WTC11 (cell line): ENCODE measurements at regions of chr6 and their contacts with region 1.

Region 1: GRCh38 chr6:39302669-39303424 is 11.4 kb downstream of the KCNK17 start:
- DNase-seq: peak; percentile 95
- ATAC-seq: peak; percentile 86
- H3K4me3 Mint-ChIP-seq: peak overlapping the region; percentile 21
- H3K27ac Mint-ChIP-seq: no peak overlapping the region
- H3K4me1 Mint-ChIP-seq: peaks cover 17% of the 10 kb centered on the region
- H3K27me3 Mint-ChIP-seq: no peaks in the 10 kb centered on the region; the same call in 1 of the 2 replicates
- CTCF ChIP-seq: peak; percentile 59

Region 2: DNA sequence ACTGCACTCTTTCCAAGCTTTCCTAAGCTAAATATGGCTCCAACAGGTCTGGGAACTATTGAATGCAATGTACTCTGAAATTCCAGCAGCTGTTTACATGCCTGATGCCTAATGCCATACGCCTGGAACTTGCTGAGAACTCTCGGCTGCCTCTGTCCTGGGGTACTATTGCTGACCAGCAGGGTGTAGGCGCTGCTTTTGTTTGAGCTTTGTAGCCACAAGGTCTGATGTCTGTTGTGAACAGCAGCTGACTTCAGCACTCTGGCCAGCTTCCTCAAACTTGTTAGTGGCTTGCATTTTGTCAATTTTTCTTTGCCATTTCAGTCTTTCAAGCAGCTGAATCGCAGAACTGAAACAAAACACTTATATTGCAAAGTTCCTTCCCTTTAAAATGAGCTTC is 214.5 kb before region 1 on chr6:
- CTCF ChIA-PET with region 1: interaction called, 13 read pairs
- POLR2A ChIA-PET with region 1: no interaction called
- DNase-seq: peak; percentile 75
- ATAC-seq: peak; percentile 91
- H3K4me3 Mint-ChIP-seq: no peak overlapping the region
- H3K27ac Mint-ChIP-seq: no peak overlapping the region
- H3K4me1 Mint-ChIP-seq: peaks cover 49% of the 10 kb centered on the region
- H3K27me3 Mint-ChIP-seq: no peaks in the 10 kb centered on the region; the same call in 1 of the 2 replicates
- CTCF ChIP-seq: no peak

Region 3: DNA sequence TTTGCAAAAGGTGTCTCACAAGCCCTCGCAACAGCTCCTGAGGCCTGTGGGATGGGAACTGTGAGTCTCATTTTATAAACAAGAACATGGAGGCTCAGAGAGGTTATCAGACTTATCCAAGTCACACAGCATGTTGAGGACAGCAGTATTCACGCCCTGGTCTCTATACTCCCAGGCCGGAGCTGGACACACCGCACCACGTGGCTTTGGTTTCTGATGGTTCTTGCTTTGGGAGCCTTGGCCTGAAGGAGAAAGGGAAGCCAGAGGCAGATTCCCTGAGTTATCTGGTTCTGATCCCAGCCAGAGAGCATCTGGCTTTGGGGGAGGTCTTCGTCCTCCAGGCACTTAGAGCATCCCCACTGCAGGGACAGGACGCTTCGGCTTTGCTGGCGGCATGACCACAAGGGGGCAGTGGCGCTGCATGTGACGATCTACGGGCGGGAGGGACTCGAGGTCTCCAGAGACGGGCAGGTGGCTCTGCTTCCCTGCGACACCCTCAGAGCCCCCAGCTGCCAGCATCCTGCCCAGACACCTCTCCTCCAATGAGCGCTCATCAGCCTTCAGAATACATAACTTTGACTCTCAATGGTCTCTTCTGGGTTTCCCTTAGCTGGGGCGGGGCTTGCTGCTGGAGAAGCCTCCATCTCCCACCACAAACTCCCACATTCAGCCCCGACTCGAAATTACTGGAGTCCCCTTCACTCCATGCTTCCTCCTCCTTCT is 136.5 kb before region 1 on chr6:
- CTCF ChIA-PET with region 1: interaction called, 214 read pairs
- POLR2A ChIA-PET with region 1: no interaction called
- DNase-seq: peak; percentile 97
- ATAC-seq: peak; percentile 96
- H3K4me3 Mint-ChIP-seq: no peak overlapping the region
- H3K27ac Mint-ChIP-seq: no peak overlapping the region
- H3K4me1 Mint-ChIP-seq: peaks cover 5% of the 10 kb centered on the region
- H3K27me3 Mint-ChIP-seq: peaks cover 8% of the 10 kb centered on the region
- CTCF ChIP-seq: peak; percentile 94

Region 4: DNA sequence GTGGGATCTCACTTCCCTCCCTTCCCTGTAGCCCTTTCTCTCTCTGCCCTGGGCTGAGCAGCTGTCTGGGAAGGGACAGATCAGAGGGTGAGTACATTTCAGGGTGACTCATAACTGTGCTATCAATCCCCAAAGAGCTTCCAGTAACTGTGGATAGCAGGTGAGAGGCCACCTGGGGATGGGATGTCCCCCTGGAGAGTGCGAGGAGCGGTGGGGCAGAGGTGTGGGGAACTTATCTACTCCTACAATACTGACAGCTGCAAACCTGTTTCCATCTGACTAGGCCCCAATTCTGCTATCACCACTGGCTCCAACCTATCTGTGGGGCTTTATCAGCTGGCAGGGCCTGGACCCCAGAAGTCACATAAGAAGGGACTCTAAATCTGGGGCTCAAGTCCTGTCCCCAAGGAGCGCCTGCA is 106.2 kb before region 1 on chr6:
- CTCF ChIA-PET with region 1: interaction called, 204 read pairs
- POLR2A ChIA-PET with region 1: no interaction called
- DNase-seq: no peak
- ATAC-seq: no peak
- H3K4me3 Mint-ChIP-seq: no peak overlapping the region
- H3K27ac Mint-ChIP-seq: no peak overlapping the region; the same call in 1 of the 2 replicates
- H3K4me1 Mint-ChIP-seq: peaks cover 24% of the 10 kb centered on the region
- H3K27me3 Mint-ChIP-seq: no peaks in the 10 kb centered on the region; the same call in 1 of the 2 replicates
- CTCF ChIP-seq: no peak

Region 5: DNA sequence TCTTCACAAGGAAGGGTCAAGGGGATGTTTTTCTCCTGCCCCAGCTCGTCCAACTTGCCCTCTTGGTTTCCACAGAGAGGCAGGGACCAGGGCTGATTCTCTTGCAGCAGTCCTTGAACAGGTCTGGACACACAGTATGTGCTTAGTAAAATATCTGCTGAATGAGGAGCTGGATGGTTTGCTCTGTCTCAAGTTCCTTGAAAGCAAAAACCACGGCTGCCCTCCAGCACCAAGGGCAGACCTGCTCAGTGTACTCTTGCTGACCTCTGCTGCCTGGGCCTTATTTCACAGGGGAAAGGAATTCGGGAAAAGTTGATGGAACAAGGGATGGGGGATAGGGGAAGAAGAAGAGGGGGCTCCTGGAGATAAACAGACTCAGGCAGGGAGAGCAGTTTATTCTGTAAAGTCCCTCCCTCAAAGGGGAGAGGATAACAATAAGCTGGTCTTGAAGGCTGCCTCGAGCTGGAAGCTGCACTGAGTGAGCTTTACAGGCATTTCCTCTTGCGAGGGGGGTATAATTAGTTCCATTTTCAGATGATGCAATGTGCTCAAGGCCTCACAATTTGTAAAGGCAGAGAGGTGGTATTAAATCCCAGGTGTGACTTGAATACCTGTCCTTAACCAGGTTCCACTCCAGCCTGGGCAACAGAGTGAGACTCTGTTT is 83.8 kb before region 1 on chr6:
- CTCF ChIA-PET with region 1: interaction called, 78 read pairs
- POLR2A ChIA-PET with region 1: no interaction called
- DNase-seq: no peak
- ATAC-seq: no peak
- H3K4me3 Mint-ChIP-seq: no peak overlapping the region
- H3K27ac Mint-ChIP-seq: peak overlapping the region; percentile 48; the same call in 1 of the 2 replicates
- H3K4me1 Mint-ChIP-seq: peaks cover 92% of the 10 kb centered on the region
- H3K27me3 Mint-ChIP-seq: no peaks in the 10 kb centered on the region
- CTCF ChIP-seq: no peak

Region 6: GRCh38 chr6:39256294-39256940 is 46.4 kb before region 1 on chr6:
- CTCF ChIA-PET with region 1: interaction called, 17 read pairs
- POLR2A ChIA-PET with region 1: no interaction called
- DNase-seq: peak; percentile 22
- ATAC-seq: peak; percentile 97
- H3K4me3 Mint-ChIP-seq: no peak overlapping the region
- H3K27ac Mint-ChIP-seq: peak overlapping the region; percentile 31; the same call in 1 of the 2 replicates
- H3K4me1 Mint-ChIP-seq: peaks cover 44% of the 10 kb centered on the region
- H3K27me3 Mint-ChIP-seq: peaks cover 2% of the 10 kb centered on the region; the same call in 1 of the 2 replicates
- CTCF ChIP-seq: no peak

Region 7: DNA sequence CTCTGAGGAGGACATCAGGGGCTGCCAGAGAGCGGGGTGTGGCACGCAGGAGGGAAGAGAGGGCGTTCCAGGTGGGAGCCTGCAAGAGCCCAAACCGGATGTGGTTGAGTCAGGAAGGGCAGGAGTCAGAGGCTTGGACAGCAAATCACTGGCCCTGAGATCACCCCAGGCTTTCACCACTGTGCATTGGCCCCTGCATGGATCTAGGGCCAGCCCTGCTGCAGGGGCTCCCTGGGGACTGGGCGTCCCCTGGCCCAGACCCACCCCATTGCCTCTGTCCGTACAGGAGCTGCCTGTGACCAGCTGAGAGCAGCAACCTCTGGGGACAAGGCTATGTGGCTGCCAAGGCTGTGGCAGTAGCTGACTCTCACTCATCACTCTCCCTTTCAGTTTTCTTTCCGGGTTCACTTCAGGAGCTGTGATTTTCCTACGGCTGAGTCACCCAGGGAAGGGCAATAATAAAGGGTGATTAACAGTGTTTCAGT is 22.6 kb before region 1 on chr6:
- CTCF ChIA-PET with region 1: interaction called, 25 read pairs
- POLR2A ChIA-PET with region 1: no interaction called
- DNase-seq: no peak
- ATAC-seq: peak; percentile 51; the same call in 1 of the 2 replicates
- H3K4me3 Mint-ChIP-seq: no peak overlapping the region
- H3K27ac Mint-ChIP-seq: no peak overlapping the region
- H3K4me1 Mint-ChIP-seq: peaks cover 10% of the 10 kb centered on the region; the same call in 1 of the 2 replicates
- H3K27me3 Mint-ChIP-seq: peaks cover 5% of the 10 kb centered on the region
- CTCF ChIP-seq: no peak